Prostate gland (tissue), 2 donors: ENCODE measurements at regions of chr12 and their contacts with region 1.

Region 1: DNA sequence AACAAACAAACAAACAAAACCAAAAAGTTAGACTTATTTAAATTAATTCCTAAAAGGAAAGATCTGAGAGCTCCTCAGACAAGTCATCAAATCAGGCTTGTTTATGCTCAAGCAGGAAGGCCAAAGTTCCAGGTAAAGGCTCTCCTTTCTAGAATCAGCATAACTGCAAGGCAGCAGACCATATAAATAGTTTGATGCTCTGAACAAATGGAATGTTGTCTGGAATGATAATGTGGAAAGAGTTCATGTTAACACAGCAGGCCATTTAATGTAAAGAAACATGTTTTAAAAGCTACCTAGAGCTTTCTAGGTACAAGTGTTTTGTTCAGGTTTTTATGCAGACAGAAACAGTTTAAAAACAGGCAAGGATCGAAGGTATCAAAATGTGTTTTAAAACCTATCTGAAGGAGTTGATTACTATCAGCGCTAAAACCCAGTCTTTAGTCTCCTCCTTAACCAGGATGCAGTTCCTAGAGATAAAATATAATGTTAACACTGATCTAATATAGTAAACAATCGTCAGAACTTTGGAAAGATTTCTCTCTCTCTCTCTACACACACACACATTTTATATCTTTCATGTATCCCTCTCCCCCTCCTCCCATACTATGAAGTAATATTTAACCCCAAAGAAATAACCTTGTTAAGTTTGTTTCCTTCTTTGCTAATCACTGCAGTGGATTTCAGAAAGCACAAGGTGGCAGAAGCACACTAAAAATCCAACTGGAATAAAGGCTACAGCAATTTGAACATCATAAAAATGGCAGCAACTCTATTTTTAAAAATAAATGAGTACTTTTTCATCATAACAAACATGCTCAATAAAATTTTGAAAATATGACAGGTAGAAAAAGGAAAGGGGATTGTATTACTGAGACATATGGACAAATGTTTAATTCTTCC is 135.5 kb downstream of the PAWR start:
- DNase-seq: no peak
- H3K4me3 ChIP-seq: no peak overlapping the region
- H3K27ac ChIP-seq: peak overlapping the region; percentile 82 to 83
- H3K4me1 ChIP-seq: peaks cover 3% of the 10 kb centered on the region
- H3K27me3 ChIP-seq: no peaks in the 10 kb centered on the region
- CTCF ChIP-seq: peak; percentile 40 to 94 (median 66)
- POLR2A ChIP-seq: no peak

Region 2: DNA sequence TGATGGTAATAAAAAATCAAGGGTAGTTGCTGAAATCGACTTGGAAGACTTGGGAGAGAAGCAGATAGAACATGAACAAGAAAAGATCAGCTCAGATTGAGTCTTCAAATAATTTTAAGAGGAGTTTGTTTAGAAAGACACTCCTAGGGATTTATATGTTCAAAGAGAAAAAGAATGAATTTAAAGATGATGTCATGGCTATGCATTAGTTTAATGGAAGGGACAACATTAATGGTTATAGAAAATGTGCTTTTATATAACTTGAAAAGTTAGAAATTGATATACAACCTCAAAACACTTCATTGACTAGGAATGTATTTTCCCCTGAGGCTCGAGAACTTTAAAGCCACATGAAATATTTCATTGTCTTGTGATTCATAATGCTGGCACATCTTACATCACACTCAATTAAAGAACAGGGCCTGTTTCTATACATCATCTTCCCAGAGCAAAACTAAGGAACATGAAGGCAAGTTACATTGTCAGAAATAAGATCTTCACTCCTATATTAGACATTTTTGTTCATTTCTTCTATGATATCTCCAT is 170.6 kb after region 1 on chr12:
- intact Hi-C with region 1: no loop called
- DNase-seq: no peak
- H3K4me3 ChIP-seq: no peak overlapping the region
- H3K27ac ChIP-seq: no peak overlapping the region
- H3K4me1 ChIP-seq: no peaks in the 10 kb centered on the region
- H3K27me3 ChIP-seq: no peaks in the 10 kb centered on the region
- CTCF ChIP-seq: no peak
- POLR2A ChIP-seq: no peak

Region 3: DNA sequence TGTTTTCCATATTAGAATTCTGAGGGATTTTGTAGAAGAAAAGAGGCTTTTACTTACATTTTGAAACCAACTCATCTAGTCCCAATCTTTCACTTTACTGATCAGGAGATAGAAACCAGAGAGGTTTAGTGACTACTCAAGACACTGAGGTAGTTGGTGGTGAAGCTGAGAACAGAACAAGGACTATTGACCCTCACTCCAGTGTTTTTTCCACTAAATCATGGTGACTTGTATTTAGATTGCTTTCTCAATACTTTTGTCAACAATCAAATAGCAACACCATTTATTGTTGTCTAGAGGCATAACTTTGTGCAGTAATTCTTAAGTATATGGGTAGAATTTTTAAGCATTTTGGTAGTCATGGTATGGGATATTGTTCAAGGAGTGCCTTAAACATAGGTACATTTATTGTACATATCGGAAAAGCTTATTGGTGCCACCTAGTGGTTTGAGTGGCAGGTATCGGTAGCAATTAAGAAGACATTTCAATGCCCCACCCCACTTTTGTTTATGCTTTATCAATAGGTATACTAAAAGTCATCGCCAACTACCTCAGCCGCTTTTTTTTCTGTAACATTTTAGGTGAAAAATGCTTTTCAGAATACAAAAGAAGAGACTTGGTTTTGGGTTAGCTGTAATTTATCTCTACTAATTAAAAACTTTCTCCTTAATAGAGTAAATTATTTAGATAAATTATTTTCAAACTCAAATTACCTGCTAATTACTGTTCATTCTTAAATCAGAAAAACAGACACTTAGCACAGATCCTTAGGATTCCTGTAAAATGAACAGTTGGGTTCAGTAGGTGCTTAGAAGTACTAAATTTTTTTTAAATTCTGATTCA is 182.8 kb after region 1 on chr12:
- intact Hi-C with region 1: loop called (anchors 5 kb)
- DNase-seq: peak; percentile 66
- H3K4me3 ChIP-seq: no peak overlapping the region
- H3K27ac ChIP-seq: no peak overlapping the region
- H3K4me1 ChIP-seq: no peaks in the 10 kb centered on the region
- H3K27me3 ChIP-seq: no peaks in the 10 kb centered on the region
- CTCF ChIP-seq: peak; percentile 12 to 73 (median 72)
- POLR2A ChIP-seq: no peak